Gastrocnemius medialis (tissue), 4 donors: ENCODE measurements at regions of chr11 and their contacts with region 1.

Region 1: DNA sequence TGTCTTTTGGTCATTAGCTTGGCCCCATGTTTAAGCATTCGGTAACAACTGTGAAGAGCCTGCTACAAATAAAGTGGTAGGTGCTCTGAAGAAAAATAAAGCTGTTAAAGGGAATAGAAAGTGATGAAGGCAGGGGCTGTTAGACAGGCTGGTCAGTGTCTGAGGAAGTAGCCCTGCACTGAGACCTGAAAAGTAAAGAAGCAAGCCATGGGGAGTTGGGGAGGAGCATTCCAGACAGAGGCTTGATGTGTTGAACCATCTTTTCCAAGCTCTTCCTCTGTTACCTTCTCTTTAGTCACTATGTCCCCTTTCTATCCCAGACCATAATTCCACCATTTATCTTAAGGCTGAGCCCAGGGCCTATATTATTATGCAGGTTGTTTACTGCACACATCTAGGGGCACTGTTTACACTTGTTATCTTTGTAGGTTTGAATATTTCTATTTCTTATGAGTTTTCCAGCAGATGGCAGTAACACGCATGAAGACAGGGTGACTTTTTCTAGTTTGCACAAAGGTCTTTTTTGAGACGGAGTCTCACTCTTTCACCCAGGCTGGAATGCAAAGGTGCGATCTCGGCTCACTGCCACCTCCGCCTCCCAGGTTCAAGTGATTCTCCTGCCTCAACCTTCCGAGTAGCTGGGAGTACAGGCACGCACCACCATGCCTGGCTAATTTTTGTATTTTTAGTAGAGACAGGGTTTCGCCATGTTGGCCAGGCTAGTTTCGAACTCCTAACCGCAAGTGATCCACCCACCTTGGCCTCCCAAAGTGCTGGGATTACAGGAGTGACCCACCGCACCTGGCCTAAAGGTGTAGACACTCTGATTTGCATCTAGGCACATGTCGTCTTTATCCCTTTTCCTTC is 23.0 kb downstream of the ZFTA start:
- DNase-seq: no peak
- ATAC-seq: no peak
- H3K4me3 ChIP-seq: no peak overlapping the region
- H3K27ac ChIP-seq: no peak overlapping the region
- H3K4me1 ChIP-seq: peaks cover 0 to 4% of the 10 kb centered on the region in 2 donors
- H3K27me3 ChIP-seq: no peaks in the 10 kb centered on the region
- CTCF ChIP-seq: no peak
- POLR2A ChIP-seq: no peak

Region 2: DNA sequence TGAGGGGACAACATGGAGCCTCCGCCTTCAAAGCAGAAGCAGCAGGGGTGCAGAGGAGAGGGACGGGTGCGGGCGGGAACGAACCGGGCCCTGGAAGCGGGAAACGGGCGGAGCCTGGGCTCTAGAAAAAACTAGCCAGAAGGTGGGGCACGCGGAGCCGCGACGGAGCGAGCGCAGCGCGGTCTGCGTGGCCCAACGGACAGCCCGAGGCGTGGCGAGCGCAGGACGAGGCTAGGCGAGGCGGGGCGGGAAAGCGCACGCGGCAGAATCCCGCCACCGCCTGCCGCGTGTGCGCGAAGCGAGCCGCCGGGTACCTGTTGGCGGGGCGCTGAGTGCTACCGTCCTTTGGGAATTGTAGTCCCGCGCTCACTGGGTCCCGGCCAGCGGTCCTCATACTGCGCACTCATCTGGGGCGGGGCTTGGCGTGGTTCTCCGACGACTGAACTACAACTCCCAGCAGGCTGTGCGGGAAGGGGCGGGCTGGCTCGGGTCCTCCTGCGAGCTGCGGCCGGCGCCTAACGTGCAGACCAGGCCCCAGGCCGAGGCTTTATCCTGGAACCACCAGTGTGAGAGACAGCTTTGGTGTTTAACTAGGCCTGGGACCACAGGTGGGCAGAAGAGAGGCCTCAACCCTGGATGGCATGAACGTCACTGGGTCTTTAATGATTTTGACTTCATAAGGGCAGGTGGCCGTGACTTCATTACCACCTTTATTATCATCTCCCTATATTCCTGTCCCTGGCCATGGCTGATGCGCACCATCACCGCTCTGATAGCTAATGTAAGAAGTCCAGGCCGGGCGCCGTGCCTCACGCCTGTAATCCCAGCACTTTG is 74.0 kb before region 1 on chr11 and contains the start of gene ATL3:
- in situ Hi-C with region 1: loop called in 1 of 4 experiments (anchors 10 kb)
- intact Hi-C with region 1: no loop called
- DNase-seq: peak; percentile 97 to 98
- ATAC-seq: peak; percentile 88 to 91
- H3K4me3 ChIP-seq: peak within 1 kb of the TSS; percentile 78 to 92 (median 85)
- H3K27ac ChIP-seq: peak within 1 kb of the TSS; percentile 96 to 98 (median 97)
- H3K4me1 ChIP-seq: peaks cover 46 to 48% of the 10 kb centered on the region in 2 donors
- H3K27me3 ChIP-seq: no peaks in the 10 kb centered on the region
- CTCF ChIP-seq: peak in 2 of 5 experiments; percentile 12 to 23
- POLR2A ChIP-seq: peak; percentile 75
- total RNA-seq, gene ATL3: 10.2 to 16.5 (median 12.4) TPM

Region 3: DNA sequence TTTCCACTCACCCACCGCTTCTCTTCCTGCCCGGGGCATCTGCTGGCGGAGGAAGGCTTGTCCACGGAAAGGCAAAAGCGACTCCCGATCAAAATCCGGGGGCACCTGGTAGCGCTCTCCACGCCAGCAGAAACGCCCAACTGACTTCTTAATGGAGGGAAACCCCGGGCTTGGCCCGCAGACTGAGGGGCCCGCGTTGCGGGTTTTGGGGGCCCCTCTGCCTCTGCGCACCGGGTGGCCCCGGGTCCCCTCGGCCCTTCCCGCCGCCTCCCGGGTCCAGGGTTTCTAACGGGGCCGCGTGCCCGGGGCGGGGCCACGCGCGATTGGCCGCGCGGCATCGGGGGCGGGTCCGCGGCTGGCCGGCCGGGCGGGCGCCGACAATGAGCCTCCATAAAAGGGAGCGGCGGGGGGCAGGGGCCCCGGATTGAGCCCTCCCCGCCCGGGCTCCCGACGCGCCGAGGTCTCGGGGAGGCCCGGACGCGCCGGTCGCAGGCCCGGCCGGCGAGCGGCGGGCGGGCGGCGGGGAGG is 67.6 kb after region 1 on chr11 and contains the start of gene SPINDOC:
- in situ Hi-C with region 1: no loop called
- intact Hi-C with region 1: no loop called
- DNase-seq: peak; percentile 56 to 66
- ATAC-seq: peak; percentile 86 to 92
- H3K4me3 ChIP-seq: peak within 1 kb of the TSS; percentile 82 to 99 (median 90)
- H3K27ac ChIP-seq: peak within 1 kb of the TSS; percentile 70 to 75 (median 73)
- H3K4me1 ChIP-seq: peaks cover 9 to 16% of the 10 kb centered on the region in 2 donors
- H3K27me3 ChIP-seq: no peaks in the 10 kb centered on the region
- CTCF ChIP-seq: no peak
- POLR2A ChIP-seq: peak; percentile 56 to 80
- total RNA-seq, gene SPINDOC: 2.7 to 6.3 (median 3.5) TPM

Region 4: GRCh38 chr11:64015935-64016845 is 270.7 kb after region 1 on chr11:
- in situ Hi-C with region 1: no loop called
- intact Hi-C with region 1: no loop called
- DNase-seq: no peak
- ATAC-seq: no peak
- H3K4me3 ChIP-seq: no peak overlapping the region
- H3K27ac ChIP-seq: no peak overlapping the region
- H3K4me1 ChIP-seq: peaks cover 11 to 18% of the 10 kb centered on the region in 2 donors
- H3K27me3 ChIP-seq: no peaks in the 10 kb centered on the region
- CTCF ChIP-seq: no peak
- POLR2A ChIP-seq: no peak